ENCODE measurements at regions of chr16 and their contacts with region 1.

Region 1: DNA sequence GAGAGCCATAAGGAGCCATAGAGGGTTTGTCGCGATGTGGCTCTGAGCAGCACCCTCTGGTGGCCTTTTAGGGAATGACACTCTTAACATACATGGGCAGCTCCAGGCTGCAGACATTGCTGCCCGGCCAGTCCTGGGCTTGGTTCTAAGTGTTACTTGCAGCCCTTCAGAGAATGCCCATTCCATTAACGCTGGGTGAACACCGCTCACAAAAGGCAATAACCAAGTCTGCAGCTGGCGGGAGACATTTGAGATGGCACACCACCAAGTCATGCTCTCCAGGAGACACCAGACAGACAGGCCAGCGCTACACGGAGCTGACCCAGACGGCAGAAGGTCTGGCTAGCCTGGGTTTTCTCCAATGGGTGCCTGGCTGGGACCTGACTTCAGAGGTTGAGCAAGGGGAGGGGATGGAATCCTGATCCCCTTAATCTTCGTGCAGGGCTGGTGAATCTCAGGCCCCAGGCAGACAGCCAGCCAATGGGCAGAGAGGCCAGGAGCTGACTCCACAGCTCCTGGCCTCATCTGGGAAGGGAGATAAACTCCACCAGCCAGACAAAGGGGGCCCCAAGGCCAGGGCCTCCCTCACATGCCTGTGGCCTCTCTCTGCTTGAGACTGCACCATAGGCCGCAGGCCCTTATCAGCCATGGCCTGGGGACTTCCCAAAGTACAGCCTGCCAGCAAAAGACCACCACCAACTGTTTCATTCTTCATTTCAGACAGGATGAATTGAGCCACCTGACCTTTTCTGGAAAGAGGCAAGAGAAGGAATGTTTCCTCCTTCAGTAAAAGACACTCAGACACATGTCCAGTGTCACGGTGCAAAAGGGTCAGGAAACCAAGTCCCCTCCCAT is 58.8 kb downstream of the ZDHHC7 start:
- DNase-seq: peak; percentile 84
- H3K4me3 ChIP-seq: no peak overlapping the region
- H3K27ac ChIP-seq: peak overlapping the region; percentile 29 to 43
- H3K4me1 ChIP-seq: peaks cover 7% of the 10 kb centered on the region
- H3K27me3 ChIP-seq: no peaks in the 10 kb centered on the region
- CTCF ChIP-seq: peak; percentile 90 to 96 (median 92)
- POLR2A ChIP-seq: no peak

Region 2: DNA sequence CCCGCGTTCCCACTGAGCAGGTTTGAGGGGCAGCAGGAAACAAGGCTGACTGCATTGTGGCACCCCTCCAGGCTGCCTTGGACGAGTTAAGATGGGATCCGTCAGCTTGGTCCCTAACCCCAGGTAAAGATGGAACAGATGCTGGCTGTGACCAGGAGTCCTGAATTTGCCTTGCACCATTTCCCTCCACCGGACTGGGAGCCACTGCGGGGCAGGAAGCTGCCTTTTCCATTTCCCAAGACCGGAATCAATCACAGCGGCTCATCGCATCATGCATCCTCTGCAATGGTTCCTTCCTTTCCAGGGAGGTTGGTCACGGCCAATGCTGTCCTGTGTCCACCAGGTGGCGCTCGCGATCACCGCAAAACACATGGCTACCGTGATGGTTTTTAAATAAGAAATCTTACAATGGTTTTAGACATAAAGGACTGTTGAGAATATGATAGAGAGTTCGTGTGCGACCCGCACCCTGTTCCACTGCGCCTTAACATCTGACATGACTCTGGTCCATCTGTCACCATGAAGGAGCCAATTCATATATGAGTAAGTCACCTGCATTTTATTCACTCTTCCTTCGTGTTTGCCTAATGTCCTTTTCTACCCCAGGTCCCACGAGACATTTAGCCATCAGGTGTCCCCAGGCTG is 441.3 kb before region 1 on chr16:
- intact Hi-C with region 1: loop called (anchors 10 kb)
- DNase-seq: peak; percentile 75
- H3K4me3 ChIP-seq: no peak overlapping the region
- H3K27ac ChIP-seq: no peak overlapping the region
- H3K4me1 ChIP-seq: no peaks in the 10 kb centered on the region
- H3K27me3 ChIP-seq: no peaks in the 10 kb centered on the region
- CTCF ChIP-seq: peak; percentile 89 to 99 (median 96)
- POLR2A ChIP-seq: no peak

Region 3: DNA sequence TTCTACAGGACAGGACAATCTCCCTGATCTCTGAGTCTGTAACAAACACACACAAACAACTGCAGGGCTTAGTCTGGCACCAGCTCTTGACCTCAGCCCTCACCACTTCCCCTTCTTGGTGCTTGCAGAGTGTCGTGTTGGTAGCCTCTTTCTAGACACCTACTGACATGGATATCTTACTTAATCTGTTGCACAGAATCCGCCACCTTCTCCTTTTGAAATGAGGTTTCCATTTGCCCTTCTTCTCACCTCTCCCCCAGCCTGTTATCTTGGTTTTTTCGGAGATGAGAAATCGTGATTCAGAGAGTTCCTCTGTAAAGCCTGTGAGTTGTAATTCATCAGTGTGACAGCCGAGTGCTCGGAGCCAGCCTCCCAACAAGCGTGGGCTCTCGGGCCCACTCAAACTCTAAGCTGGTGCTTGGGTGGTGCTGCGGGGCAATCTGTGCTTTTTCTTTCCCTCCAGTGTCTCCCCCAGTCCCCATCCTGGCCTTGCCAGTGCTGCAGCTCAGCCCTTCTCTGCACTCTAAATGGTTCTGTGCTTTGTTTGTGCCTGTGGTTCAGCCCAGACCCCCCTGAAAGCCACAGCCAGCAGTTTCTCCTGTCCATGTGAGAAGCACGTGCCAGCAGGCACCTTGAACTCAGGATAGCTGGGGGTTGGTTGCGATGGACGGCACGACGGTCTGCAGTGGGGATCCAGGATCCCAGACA is 103.1 kb after region 1 on chr16:
- intact Hi-C with region 1: no loop called
- DNase-seq: peak; percentile 47
- H3K4me3 ChIP-seq: peak overlapping the region in 1 of 2 donors; percentile 7
- H3K27ac ChIP-seq: peak overlapping the region; percentile 74 to 76
- H3K4me1 ChIP-seq: no peaks in the 10 kb centered on the region
- H3K27me3 ChIP-seq: no peaks in the 10 kb centered on the region
- CTCF ChIP-seq: no peak
- POLR2A ChIP-seq: no peak

Region 4: DNA sequence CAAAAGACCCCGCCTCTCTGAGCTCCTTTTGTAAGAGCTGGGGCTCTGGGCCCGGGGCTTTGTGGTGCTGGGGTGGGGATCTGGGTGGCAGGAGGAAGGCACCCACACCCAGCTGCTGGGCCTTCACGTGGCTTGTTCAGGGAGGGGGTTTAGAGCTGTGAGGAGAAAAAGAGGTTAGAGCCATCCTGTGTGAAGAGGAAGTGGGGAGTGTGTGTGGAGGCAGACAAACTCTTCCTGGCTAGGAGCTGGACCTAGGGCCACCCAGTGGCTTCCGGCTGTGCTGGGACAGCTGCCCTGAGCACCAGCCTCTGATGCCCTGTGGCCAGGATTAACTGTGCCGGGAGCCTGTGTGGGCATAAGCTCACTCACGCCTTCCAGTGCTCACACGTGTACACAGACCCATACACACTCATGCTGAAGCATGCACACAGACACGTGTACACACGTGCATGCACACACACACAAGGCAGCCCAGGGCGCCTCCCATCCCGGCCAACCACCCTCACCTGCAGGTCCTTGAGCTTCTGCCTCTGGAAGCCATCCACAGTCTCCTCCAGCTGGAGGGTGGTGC is 152.3 kb after region 1 on chr16:
- intact Hi-C with region 1: no loop called
- DNase-seq: no peak
- H3K4me3 ChIP-seq: no peak overlapping the region
- H3K27ac ChIP-seq: no peak overlapping the region
- H3K4me1 ChIP-seq: no peaks in the 10 kb centered on the region
- H3K27me3 ChIP-seq: no peaks in the 10 kb centered on the region
- CTCF ChIP-seq: no peak
- POLR2A ChIP-seq: no peak

Measured in prostate gland (tissue), 2 donors.